ENCODE measurements at regions of chr10 and their contacts with region 1.

Region 1: DNA sequence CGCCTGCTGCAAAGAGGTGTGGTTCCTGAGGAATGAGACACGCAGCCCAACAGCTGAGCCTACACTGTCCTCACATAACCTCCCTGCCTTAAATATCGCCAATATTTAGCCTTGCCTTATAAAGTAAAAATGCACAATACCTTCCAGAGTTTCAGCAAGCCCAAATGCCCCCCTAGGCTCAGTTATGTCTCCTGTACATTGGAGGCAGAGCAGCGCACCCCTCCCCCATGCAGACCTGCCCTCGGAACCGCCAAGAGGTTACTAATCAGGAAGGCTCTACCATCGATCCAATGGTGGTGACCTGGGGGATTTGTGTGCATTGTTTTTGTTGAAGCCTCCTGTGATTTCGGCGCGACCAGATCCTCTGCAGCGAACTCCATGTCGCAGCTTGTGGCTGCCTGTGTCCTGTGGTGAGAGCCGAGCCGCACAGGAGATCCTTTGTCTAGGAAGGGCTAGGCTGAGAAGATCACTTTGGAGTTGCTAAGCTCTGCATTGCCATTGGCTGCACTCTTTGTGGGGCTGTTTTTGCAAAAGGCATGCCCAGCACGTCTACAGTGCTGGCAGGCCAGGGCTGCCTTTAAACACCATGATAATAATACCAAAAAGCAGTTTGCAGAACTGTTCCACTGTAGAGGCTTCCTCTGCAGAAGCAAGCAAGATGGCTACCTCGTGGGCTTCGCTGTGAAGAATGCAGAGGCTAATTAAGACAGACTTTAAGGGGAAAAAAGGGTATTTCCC is 40.1 kb downstream of the TET1 start:
- DNase-seq: peak; percentile 62
- ATAC-seq: peak; percentile 91 to 95

Region 2: DNA sequence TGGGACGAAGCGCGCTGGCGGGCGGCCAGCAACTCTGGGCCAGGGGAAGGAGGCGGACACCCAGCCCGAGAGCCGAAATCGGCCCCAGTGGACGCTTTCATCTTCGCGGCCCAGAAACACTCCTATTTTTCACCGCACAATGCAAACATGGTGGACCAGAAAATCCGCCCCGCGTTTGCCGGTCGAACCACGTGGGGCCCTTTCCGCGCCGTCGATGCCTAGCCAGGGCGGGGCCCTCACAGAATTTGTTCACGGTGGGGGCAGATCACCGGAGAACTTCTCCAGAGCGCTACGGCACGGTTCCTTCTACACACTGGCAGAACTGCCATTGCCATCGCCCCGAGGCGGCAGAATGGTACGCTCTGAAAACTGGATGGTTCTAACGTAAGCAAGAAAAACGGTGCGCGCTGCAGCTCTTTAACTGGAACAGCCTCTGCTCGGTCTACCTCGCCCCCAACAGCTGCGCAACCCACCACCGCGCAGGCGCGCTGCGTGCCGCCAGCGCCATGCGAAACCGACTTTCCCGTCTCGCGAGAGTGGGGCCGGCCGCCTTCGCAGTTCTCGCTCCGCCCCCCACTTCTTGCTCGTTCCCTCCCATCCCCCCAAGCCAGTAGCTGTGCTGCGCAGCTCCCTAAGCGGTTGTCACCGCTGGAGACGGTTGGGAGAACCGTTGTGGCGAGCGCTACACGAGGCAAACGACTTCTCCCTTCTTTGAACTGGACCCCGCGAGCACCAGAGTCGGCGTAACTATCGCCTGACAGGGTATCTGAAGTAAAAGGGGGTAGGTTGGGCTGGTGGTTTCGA is 268.6 kb before region 1 on chr10 and contains the start of gene HNRNPH3:
- intact Hi-C with region 1: no loop called
- DNase-seq: peak; percentile 98
- ATAC-seq: peak; percentile 93
- total RNA-seq, gene HNRNPH3: 81.5 to 130 TPM

Region 3: DNA sequence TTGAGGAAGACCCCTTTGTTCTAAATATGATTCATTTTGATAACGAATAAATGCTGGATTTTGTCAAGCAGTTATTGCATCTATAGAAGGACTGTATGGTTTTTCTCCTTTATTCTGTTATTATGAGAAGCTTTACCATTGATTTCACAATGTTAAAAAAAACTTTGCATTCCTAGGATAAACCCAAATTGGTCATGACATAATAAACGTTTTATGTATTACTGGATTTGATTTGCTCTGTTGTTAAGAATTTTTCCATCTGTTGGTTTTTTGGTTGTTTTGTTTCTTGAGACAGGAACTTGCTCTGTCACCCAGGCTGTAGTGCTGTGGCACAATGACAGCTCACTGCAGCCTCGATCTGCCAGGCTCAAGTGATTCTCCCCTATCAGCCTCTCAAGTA is 126.2 kb before region 1 on chr10:
- intact Hi-C with region 1: no loop called
- DNase-seq: no peak
- ATAC-seq: no peak

Region 4: GRCh38 chr10:68560186-68560942 is 39.8 kb before region 1 on chr10 and contains the start of gene TET1:
- intact Hi-C with region 1: loop called in 1 of 2 experiments (anchors 1 kb)
- DNase-seq: peak; percentile 48
- ATAC-seq: peak; percentile 80 to 85
- total RNA-seq, gene TET1: 3.4 to 4.0 TPM

Region 5: DNA sequence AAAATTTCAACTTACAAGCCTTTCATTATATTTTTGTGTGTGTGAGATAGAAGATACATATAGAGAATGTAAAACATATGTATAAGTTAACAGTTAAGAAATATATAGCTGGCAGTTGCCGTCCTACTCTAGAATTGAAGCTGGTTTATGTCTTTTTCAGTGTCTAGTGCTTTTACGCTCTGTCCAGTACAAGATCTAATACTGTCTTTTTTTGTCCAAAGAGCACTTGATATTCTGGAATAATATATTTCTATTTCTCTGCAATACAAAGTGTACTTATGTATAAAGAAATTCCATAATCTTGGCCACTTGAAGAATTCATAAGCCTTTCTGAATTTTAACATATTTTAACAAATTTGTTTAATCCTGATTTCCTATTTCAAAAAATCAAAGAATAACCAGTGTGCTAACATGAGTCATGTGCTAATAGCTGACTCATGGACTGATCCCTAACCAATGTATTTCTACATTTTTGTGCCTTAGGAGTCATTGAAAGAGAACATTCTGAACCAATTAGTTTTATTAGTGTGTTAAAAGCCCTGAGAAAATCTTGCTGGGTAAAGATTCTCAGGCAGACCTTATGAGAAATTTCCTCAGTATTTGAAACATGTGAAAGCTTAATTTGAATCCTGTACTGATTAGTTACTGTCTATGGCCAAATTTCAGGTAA is 47.6 kb after region 1 on chr10:
- intact Hi-C with region 1: no loop called
- DNase-seq: no peak
- ATAC-seq: peak in 1 of 2 donors; percentile 62

Measured in left cardiac atrium (tissue), 4 donors.